ENCODE measurements at regions of chr1 and their contacts with region 1.

Region 1: DNA sequence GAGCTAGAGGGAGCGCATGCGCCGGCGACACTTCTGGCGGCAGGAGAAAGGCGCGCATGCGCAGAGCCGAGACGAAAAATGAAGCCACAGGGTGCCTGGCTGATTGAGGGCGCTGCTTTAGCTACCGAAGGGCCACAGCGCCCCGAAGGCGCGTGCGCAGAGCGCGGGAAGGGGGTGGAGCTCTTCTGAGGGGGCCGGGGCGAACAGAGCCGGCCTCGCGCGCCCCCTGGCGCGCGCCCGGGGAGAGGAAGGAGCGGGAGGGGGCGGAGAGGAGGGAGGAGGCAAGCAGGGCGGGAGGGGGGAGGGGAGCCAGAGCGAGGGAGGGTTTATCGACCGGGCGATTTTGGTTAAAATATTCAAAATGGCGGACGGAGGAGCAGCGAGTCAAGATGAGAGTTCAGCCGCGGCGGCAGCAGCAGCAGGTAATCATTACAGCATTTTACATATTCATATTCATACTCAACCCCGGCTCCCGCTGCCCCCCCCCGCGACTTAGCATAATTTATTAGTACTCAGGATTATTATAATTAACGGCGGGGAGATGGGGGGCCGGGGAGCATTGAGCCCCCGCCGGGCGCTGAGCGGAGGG is at the start of gene POU2F1:
- DNase-seq: peak; percentile 99
- H3K4me3 ChIP-seq: peak within 1 kb of the TSS; percentile 81
- H3K27ac ChIP-seq: peak within 1 kb of the TSS; percentile 97
- H3K4me1 ChIP-seq: peaks cover 22% of the 10 kb centered on the region
- H3K27me3 ChIP-seq: no peaks in the 10 kb centered on the region
- CTCF ChIP-seq: peak; percentile 84
- total RNA-seq, gene POU2F1: 25.0 and 28.3 TPM in 2 replicates

Region 2: DNA sequence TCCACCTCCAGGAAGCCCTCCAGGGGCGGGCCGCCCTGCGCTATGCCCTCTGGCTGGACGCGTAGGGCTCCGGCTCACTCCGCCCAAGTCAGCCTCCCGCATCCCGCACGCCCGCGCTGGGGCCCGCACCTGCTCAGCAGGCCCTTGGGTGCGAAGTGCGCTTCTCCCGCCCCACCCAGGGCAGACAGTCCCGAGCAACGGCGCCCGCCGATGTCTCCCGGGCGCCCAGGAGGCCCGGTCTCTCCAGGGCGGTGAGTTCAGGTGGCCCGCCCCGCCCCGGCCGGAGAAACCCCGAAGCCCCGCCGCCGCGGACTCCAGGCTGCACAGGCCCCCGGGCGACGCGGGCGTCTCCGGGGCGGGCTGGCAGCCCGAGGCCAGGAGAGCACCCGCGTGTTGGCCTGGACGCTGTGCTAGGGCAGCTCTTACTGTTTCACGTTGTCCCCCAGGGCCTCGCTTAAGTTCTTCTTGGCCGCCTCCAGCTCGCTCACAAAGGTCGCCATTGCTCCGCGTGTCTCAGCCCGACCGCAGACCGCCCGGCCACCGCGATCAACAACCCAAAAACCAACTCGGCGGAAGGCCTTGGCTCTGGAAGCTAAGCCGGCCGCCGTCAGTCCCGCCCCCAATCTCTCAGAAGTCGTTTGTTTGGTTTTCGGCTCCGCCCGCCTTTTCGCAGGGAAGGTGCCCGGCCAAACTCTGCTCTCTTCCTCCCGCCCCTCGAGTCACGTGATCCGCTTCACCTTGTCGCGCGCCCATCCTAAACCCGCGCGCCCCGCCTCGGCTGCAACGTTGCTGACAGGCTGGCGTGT is 344.7 kb before region 1 on chr1 and contains the start of gene TADA1:
- CTCF ChIA-PET with region 1: interaction called, 10 read pairs
- POLR2A ChIA-PET with region 1: no interaction called
- intact Hi-C with region 1: no loop called
- DNase-seq: peak; percentile 100
- H3K4me3 ChIP-seq: peak within 1 kb of the TSS; percentile 72
- H3K27ac ChIP-seq: peak within 1 kb of the TSS; percentile 88
- H3K4me1 ChIP-seq: peaks cover 10% of the 10 kb centered on the region
- H3K27me3 ChIP-seq: no peaks in the 10 kb centered on the region
- CTCF ChIP-seq: no peak
- total RNA-seq, gene TADA1: 15.2 and 17.8 TPM in 2 replicates

Region 3: DNA sequence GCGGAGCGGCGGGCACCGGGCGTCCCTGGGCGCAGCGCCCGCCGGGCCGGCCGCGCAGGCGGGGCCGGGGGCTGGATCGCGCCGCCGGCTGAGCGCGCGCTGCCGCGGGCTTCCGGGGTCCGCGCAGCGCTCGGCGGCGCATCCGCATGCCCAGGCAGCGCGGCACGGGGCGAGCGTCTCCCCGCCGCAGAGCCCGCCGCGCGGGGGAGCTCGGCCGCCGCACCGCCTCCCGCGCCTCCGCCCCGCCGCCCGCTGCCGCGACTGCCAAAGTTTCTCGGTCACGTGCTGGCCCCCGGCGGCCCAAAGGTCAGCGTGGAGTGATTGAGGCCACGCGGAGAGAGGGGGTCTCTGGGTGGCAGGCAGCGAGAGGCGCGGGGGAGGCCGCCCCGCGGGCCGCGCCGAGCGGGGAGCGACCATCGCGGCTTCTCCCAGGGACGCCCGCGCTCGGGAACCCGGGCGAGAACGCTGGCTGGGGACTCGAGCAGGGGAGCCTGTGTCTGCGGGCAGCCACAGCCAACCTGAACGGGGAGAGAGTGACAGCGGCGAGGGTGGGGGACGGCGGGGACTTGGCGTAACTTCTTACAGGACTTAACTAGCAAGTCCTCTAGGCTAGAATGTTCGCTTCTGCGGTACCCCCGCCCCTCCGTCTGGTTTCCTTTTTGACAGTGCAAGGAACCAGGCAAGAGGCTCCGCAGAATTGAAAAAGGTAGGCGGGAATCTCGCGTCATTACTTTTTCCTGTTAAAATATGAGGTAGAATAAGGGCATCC is 245.1 kb before region 1 on chr1 and contains the start of gene ILDR2:
- CTCF ChIA-PET with region 1: no interaction called
- POLR2A ChIA-PET with region 1: no interaction called
- intact Hi-C with region 1: no loop called
- DNase-seq: peak; percentile 48
- H3K4me3 ChIP-seq: peak within 1 kb of the TSS; percentile 46
- H3K27ac ChIP-seq: no peak within 1 kb of the TSS
- H3K4me1 ChIP-seq: no peaks in the 10 kb centered on the region
- H3K27me3 ChIP-seq: peaks cover 96% of the 10 kb centered on the region
- CTCF ChIP-seq: no peak
- total RNA-seq, gene ILDR2: not detected in 2 replicates

Region 4: DNA sequence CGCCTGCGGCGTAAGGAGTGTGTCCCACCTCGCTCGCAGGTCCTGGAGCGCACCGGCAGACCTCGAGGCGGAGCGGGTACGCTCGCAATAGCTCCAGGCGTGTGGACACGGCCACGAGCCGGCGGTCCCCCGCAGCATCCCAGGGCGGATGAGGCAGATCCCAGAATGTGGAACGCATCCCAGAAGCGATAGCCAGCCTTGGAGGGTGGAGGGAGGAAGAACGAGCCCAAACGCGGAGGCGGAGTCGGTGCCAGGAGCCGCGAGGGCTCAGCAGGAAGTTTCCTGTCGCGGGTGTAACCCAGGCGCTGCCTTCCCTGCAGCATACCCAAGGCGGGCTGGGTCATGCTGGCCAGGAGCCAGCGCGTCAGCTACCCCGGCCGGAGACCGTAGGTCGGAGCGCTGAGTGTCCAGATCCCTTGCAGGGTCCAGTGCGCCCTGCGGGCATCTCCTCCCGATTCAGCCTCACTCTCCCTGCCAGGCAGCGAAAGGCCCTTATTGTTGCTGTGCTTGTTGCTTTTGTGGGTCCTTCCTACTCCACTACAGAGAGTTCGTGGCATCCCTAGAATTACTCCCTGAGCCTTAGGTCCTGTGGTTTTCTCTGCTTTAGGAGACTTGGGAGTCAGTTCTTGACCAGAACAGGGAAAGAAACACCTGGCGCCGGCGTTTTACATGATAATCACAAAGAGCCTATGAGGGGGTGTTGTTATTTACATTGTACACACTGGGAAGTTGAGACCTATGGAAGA is 99.1 kb before region 1 on chr1:
- CTCF ChIA-PET with region 1: no interaction called
- POLR2A ChIA-PET with region 1: no interaction called
- intact Hi-C with region 1: no loop called
- DNase-seq: peak; percentile 92
- H3K4me3 ChIP-seq: peak overlapping the region; percentile 49
- H3K27ac ChIP-seq: peak overlapping the region; percentile 0
- H3K4me1 ChIP-seq: peaks cover 23% of the 10 kb centered on the region
- H3K27me3 ChIP-seq: no peaks in the 10 kb centered on the region
- CTCF ChIP-seq: no peak

Region 5: GRCh38 chr1:167165948-167166689 is 54.5 kb before region 1 on chr1:
- CTCF ChIA-PET with region 1: interaction called, 16 read pairs
- POLR2A ChIA-PET with region 1: no interaction called
- intact Hi-C with region 1: no loop called
- DNase-seq: peak; percentile 31
- H3K4me3 ChIP-seq: no peak overlapping the region
- H3K27ac ChIP-seq: peak overlapping the region; percentile 12
- H3K4me1 ChIP-seq: peaks cover 33% of the 10 kb centered on the region
- H3K27me3 ChIP-seq: no peaks in the 10 kb centered on the region
- CTCF ChIP-seq: no peak